ENCODE measurements at regions of chr11 and their contacts with region 1.

Region 1: GRCh38 chr11:32583459-32584271 is at the start of gene EIF3M:
- DNase-seq: peak; percentile 97 to 99 (median 97)
- ATAC-seq: peak; percentile 100
- H3K4me3 ChIP-seq: peak within 1 kb of the TSS; percentile 60 to 96 (median 87)
- H3K27ac ChIP-seq: peak within 1 kb of the TSS; percentile 5 to 88 (median 82)
- H3K4me1 ChIP-seq: peaks cover 0 to 44% (median 25%) of the 10 kb centered on the region in 12 donors
- H3K27me3 ChIP-seq: peaks cover 0 to 7% (median 0%) of the 10 kb centered on the region in 9 donors
- CTCF ChIP-seq: peak in 1 of 12 donors; percentile 20
- POLR2A ChIP-seq: peak in 1 of 2 donors; percentile 50
- total RNA-seq, gene EIF3M: 143 to 269 (median 172) TPM

Region 2: GRCh38 chr11:32602657-32603415 is 19.2 kb after region 1 on chr11:
- intact Hi-C with region 1: loop called in 1 of 10 experiments (anchors 1 kb)
- DNase-seq: no peak
- ATAC-seq: peak in 1 of 4 donors; percentile 20
- H3K4me3 ChIP-seq: no peak overlapping the region
- H3K27ac ChIP-seq: peak overlapping the region in 9 of 12 donors; percentile 0 to 53 (median 23)
- H3K4me1 ChIP-seq: peaks cover 0 to 18% (median 12%) of the 10 kb centered on the region in 12 donors
- H3K27me3 ChIP-seq: no peaks in the 10 kb centered on the region
- CTCF ChIP-seq: no peak
- POLR2A ChIP-seq: no peak

Region 3: DNA sequence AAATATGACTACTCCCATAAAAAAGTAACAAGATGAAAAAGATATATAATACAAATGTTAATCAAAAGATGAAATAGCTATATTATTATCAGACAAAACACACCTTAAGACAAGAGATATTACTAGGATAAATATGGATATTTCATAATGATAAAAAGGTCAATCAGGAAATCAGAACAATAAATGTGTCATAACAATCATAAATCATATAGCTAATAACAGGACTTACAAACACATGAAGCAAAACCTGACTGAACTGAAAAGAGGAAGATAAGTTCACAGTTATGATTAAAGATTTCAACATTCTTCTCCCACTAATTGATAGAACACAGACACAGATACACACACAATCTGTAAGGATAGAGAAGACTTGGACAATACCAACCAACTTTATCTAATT is 47.2 kb after region 1 on chr11:
- intact Hi-C with region 1: no loop called
- DNase-seq: no peak
- ATAC-seq: no peak
- H3K4me3 ChIP-seq: no peak overlapping the region
- H3K27ac ChIP-seq: no peak overlapping the region
- H3K4me1 ChIP-seq: no peaks in the 10 kb centered on the region
- H3K27me3 ChIP-seq: no peaks in the 10 kb centered on the region
- CTCF ChIP-seq: no peak
- POLR2A ChIP-seq: no peak

Measured in heart left ventricle (tissue), 16 donors.